ENCODE measurements at regions of chr1 and their contacts with region 1.

Region 1: DNA sequence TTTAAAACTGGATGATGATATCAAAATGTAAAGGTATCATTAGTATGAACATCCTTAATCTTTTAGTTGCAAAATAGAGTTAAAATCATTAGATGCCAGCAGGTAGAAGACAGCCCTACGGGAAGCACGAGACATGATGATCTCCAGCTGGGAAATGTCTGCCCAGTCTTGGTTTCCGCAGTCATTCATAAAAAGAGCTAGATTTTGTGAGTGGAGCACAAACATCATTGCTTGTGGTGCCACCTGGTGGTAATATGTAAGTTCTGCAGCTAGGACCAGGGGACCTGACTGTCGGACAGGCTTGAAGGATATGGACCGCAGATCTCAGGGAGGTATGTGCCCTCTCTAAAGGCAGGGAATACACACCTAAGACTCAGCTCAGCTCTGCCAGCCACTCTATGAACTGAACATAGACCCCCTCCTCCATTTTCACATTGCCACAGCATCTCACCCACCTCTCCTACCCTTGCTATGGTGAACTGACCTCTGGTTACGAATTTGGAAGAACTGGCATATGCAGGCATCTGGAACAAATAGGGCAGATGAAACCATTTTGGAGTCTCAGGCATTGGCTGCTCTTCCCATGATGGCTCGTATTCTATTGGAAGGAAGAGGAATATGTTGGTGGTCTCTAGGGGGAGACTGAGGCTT is 9.2 kb downstream of the FCMR start:
- DNase-seq: peak in 11 of 14 experiments; percentile 34 to 86 (median 56)
- ATAC-seq: peak; percentile 38
- H3K4me3 ChIP-seq: no peak overlapping the region
- H3K4me3 Mint-ChIP-seq: peak overlapping the region; percentile 79
- H3K27ac ChIP-seq: peak overlapping the region in 1 of 2 donors; percentile 39
- H3K27ac Mint-ChIP-seq: no peak overlapping the region
- H3K4me1 ChIP-seq: peaks cover 97% of the 10 kb centered on the region
- H3K4me1 Mint-ChIP-seq: peaks cover 92% of the 10 kb centered on the region
- H3K27me3 ChIP-seq: no peaks in the 10 kb centered on the region
- H3K27me3 Mint-ChIP-seq: no peaks in the 10 kb centered on the region
- CTCF ChIP-seq: peak; percentile 89

Region 2: DNA sequence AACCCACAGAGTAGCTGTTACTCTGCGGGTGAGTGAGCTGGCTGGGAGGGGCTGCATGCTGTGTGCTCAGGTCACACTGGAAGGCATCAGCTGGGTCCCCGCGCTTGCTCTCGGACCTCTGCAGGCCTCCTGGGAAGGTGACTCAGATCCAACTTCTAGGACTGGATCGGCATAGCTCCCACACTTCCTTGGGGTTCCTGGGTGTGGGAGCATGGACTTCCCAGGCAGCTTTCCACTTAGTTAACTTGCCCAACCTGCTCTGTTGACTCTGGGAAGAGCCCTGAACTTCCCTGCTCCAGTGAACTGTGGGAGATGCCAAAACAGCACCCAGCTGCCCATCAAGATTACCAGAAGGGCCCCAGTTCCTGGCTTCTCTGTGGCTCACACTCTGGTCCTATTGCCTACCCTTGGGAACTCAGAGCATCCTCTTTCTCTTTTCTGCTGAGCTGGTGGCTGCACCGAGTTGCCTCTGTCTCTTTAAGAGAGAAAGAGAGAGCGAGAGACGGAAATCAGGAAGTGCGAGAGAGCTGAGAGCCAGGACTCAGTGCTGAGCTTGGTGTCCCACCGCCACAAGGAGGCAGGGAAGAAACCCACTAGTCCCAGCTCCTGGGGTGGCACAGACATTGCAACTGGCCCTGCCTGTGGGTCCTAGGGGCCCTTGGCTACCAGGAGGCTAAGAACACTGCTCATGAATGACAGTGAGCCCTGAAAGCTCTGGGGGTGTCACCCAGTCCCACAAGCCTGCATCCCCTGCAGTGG is 442.5 kb before region 1 on chr1 and contains the start of gene IKBKE:
- CTCF ChIA-PET with region 1: interaction called, 3 read pairs
- POLR2A ChIA-PET with region 1: interaction called, 3 read pairs
- intact Hi-C with region 1: loop called in 1 of 2 experiments (anchors 10 kb)
- DNase-seq: peak; percentile 24 to 77 (median 40)
- ATAC-seq: peak; percentile 67
- H3K4me3 ChIP-seq: peak within 1 kb of the TSS; percentile 99
- H3K4me3 Mint-ChIP-seq: peak within 1 kb of the TSS; percentile 88
- H3K27ac ChIP-seq: peak within 1 kb of the TSS; percentile 55 to 61
- H3K27ac Mint-ChIP-seq: peak within 1 kb of the TSS; percentile 79
- H3K4me1 ChIP-seq: peaks cover 86% of the 10 kb centered on the region
- H3K4me1 Mint-ChIP-seq: peaks cover 76% of the 10 kb centered on the region
- H3K27me3 ChIP-seq: no peaks in the 10 kb centered on the region
- H3K27me3 Mint-ChIP-seq: no peaks in the 10 kb centered on the region
- CTCF ChIP-seq: no peak
- total RNA-seq, gene IKBKE: 27.9 to 29.8 TPM

Region 3: DNA sequence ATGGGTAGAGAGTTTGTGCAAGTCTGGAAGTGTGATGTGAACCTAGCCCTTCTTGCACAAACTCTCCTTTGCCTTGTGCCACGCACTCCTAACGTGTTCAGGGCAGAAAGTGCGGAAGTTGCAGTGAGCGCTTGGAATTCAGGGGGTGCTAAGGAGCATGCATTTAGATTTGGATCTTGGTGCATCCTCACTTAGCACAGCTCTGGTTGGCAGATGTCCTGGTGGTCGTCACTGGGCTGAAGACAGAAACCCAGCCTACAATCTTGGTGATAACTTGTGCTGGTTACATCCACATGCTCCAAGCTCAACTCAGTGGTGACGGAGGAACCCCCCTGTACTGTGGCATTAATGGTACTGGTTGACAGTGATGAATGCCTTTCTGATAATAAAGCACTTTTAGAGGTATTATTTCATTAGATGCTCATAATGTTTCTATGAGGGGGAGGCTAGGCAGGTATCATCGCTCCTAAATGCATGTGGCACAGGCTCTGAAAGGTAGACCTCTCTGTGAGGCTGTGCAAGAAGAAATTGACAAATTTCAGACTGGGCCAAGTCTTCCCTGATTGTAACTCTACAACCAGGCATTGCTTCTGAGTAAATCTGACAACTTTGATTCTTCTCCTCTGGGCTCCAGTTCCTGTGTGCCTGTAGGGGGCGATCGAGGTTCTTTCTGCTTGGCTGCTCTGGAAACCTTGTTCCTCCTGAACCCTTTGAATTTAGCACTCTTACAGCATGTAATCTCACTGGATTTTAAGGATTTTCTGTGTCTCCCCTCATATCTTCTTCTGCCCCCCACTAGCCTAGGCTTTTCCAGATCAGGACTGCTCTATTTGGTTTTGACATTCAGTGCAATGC is 187.2 kb before region 1 on chr1:
- CTCF ChIA-PET with region 1: interaction called, 13 read pairs
- POLR2A ChIA-PET with region 1: interaction called, 3 read pairs
- intact Hi-C with region 1: loop called (anchors 1 to 2 kb)
- DNase-seq: peak; percentile 40 to 82 (median 55)
- ATAC-seq: peak; percentile 54
- H3K4me3 ChIP-seq: no peak overlapping the region
- H3K4me3 Mint-ChIP-seq: no peak overlapping the region
- H3K27ac ChIP-seq: no peak overlapping the region
- H3K27ac Mint-ChIP-seq: peak overlapping the region; percentile 62
- H3K4me1 ChIP-seq: peaks cover 51% of the 10 kb centered on the region
- H3K4me1 Mint-ChIP-seq: peaks cover 50% of the 10 kb centered on the region
- H3K27me3 ChIP-seq: no peaks in the 10 kb centered on the region
- H3K27me3 Mint-ChIP-seq: no peaks in the 10 kb centered on the region
- CTCF ChIP-seq: peak; percentile 47

Region 4: GRCh38 chr1:206808615-206809014 is 104.0 kb before region 1 on chr1:
- CTCF ChIA-PET with region 1: interaction called, 19 read pairs
- POLR2A ChIA-PET with region 1: interaction called, 16 read pairs
- intact Hi-C with region 1: loop called (anchors 1 to 2 kb)
- DNase-seq: peak in 13 of 14 experiments; percentile 15 to 82 (median 41)
- ATAC-seq: peak; percentile 85
- H3K4me3 ChIP-seq: no peak overlapping the region
- H3K4me3 Mint-ChIP-seq: no peak overlapping the region
- H3K27ac ChIP-seq: no peak overlapping the region
- H3K27ac Mint-ChIP-seq: peak overlapping the region; percentile 28
- H3K4me1 ChIP-seq: peaks cover 34% of the 10 kb centered on the region
- H3K4me1 Mint-ChIP-seq: peaks cover 50% of the 10 kb centered on the region
- H3K27me3 ChIP-seq: no peaks in the 10 kb centered on the region
- H3K27me3 Mint-ChIP-seq: no peaks in the 10 kb centered on the region
- CTCF ChIP-seq: peak; percentile 40

Region 5: GRCh38 chr1:206895830-206896242 is 16.7 kb before region 1 on chr1:
- CTCF ChIA-PET with region 1: interaction called, 5 read pairs
- POLR2A ChIA-PET with region 1: interaction called, 384 read pairs
- intact Hi-C with region 1: no loop called
- DNase-seq: no peak
- ATAC-seq: no peak
- H3K4me3 ChIP-seq: no peak overlapping the region
- H3K4me3 Mint-ChIP-seq: no peak overlapping the region
- H3K27ac ChIP-seq: no peak overlapping the region
- H3K27ac Mint-ChIP-seq: peak overlapping the region; percentile 5
- H3K4me1 ChIP-seq: peaks cover 34% of the 10 kb centered on the region
- H3K4me1 Mint-ChIP-seq: peaks cover 72% of the 10 kb centered on the region
- H3K27me3 ChIP-seq: no peaks in the 10 kb centered on the region
- H3K27me3 Mint-ChIP-seq: no peaks in the 10 kb centered on the region
- CTCF ChIP-seq: no peak

Region 6: DNA sequence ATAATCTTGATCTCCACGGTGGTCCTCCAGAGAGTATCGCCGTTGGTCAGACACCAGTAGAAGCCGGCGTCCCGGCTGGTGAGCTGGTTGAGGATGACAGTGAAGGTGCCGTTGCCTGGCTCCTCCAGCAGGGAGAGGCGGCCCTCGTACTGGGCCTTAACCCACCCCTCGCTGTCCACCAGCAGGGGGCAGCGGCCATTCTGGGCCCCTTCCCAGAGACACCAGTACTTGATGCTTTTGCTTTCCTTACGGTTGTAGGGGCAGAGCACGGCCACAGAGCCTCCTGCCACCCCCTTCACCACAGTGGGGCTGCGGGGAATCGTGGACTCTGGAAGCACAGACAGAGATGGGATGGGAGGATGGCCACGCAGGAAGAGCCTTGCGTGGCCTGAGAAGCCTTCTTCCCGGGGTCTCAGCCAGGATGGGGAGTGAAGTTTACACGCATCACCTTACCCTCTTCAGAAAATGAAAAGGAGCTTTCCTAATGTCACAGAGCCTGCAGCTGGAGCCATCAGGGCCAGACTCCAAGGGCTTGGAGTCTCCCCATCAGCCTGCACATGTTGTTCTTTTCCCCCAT is 23.0 kb after region 1 on chr1:
- CTCF ChIA-PET with region 1: interaction called, 22 read pairs
- POLR2A ChIA-PET with region 1: interaction called, 23 read pairs
- intact Hi-C with region 1: loop called (anchors 2 kb)
- DNase-seq: peak in 8 of 14 experiments; percentile 20 to 71 (median 49)
- ATAC-seq: peak; percentile 55
- H3K4me3 ChIP-seq: no peak overlapping the region
- H3K4me3 Mint-ChIP-seq: no peak overlapping the region
- H3K27ac ChIP-seq: no peak overlapping the region
- H3K27ac Mint-ChIP-seq: no peak overlapping the region
- H3K4me1 ChIP-seq: peaks cover 24% of the 10 kb centered on the region
- H3K4me1 Mint-ChIP-seq: peaks cover 29% of the 10 kb centered on the region
- H3K27me3 ChIP-seq: no peaks in the 10 kb centered on the region
- H3K27me3 Mint-ChIP-seq: no peaks in the 10 kb centered on the region
- CTCF ChIP-seq: peak; percentile 60

Region 7: GRCh38 chr1:207025144-207025880 is 112.7 kb after region 1 on chr1:
- CTCF ChIA-PET with region 1: no interaction called
- POLR2A ChIA-PET with region 1: no interaction called
- intact Hi-C with region 1: no loop called
- DNase-seq: no peak
- ATAC-seq: no peak
- H3K4me3 ChIP-seq: no peak overlapping the region
- H3K4me3 Mint-ChIP-seq: no peak overlapping the region
- H3K27ac ChIP-seq: no peak overlapping the region
- H3K27ac Mint-ChIP-seq: no peak overlapping the region
- H3K4me1 ChIP-seq: no peaks in the 10 kb centered on the region
- H3K4me1 Mint-ChIP-seq: no peaks in the 10 kb centered on the region
- H3K27me3 ChIP-seq: peaks cover 8% of the 10 kb centered on the region in 2 experiments
- H3K27me3 Mint-ChIP-seq: peaks cover 51% of the 10 kb centered on the region
- CTCF ChIP-seq: no peak

Measured in CD4-positive, alpha-beta T cell (primary cell).